Right ventricle myocardium inferior (tissue), 1 donor: ENCODE measurements at regions of chr1 and their contacts with region 1.

Region 1: DNA sequence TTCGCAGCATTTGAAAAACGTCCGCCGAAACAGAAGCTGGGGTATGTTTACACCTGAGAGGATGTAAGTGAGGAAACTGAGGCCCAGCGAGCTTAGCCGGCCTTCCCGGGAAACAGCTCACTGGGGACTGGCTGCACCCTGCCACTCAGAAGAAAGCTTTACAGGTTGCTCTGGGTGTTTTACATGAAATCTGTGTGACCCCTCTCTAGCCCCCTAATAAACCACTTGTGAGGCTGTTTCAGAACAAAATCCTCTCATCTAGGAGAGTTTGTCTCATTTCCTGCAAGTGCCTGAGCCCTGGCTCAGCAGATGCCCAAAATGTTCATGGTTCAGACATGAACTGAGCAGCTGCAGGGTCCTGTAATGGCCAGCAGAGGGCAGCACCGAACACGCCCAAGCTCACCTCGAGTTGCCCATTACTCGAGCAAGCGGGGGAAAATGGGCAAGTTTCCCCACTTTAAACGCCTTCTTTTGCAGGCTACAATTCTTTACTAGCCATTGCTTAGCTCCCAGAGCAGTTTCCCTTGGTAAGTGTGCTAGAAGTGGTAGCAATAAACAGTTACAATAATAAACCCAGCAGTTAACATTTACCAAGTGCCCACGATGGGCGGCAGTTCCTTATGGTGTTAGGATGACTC is 76.4 kb downstream of the FHAD1 start:
- DNase-seq: peak; percentile 85
- ATAC-seq: peak; percentile 81

Region 2: DNA sequence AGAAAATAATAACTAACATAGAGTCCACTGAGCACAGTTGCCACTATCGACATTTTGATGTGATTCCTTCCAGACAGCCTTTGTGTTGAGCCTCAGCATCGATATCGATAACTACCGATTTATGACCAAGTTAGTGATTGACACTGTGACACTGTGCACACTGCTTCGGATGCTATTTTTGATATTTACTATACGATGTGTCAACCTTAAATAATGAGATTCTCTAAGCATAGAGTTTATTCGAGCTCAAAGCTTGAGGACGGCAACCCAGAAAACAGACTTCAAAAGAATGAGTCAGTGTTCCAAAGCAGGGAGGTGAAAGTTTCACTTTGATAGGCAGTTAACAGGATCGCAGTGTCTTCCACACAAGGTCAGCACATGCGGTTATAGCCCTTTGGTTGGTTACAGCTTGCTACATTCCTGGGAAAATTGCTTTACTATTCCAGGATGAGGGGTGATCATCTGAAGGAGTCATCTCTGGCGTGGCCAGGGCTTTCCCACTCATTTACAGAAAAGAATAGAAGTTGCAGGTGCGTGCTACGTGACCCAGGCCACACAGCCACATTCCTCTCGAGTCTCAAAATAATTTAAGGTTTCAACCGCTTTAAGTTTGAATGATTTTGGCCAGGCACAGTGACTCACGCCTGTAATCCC is 32.6 kb after region 1 on chr1:
- intact Hi-C with region 1: no loop called
- DNase-seq: no peak
- ATAC-seq: no peak

Region 3: DNA sequence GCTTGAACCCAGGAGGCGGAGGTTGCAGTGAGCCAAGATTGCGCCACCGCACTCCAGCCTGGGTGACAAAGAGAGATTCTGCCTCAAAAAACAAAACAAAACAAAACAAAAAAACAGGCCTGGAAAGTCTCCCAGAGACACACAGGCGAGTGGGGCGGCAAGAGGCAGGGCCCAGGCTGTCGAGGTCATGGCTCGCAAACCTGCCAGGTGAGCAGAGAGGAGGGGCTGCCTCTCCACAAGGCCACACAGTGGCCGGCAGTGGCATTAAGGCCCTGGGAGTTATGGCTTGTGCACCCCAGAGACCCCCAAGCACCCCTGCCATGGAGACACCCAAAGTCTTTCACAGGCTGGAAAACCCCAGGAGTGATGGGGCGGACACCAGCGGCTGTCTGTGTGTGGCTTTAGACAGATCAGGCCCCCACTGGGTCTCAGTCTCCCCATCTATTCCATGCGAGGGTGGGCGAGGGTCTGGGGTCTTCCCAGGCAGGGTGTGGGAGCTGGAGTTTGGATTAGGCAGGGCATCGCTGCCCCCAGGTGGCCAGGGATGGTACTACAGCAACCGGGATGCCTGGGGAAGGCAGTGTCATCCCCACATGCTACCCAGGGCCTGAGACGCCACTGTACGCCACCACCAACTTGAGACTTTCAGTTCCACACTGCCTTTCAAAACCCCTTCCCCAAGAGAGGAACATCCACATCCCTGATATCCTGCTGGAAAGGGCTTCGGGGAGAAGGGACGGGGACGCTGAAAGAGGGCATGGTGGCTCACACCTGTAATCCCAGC is 107.5 kb after region 1 on chr1:
- intact Hi-C with region 1: loop called (anchors 1 kb)
- DNase-seq: peak; percentile 85
- ATAC-seq: peak; percentile 67